ENCODE measurements at regions of chr3 and their contacts with region 1.

Region 1: GRCh38 chr3:184174646-184175492 is at the start of gene AP2M1:
- DNase-seq: peak; percentile 99
- ATAC-seq: peak; percentile 86
- H3K4me3 ChIP-seq: peak within 1 kb of the TSS; percentile 89
- H3K27ac ChIP-seq: peak within 1 kb of the TSS; percentile 62
- H3K4me1 ChIP-seq: peaks cover 54% of the 10 kb centered on the region
- H3K27me3 ChIP-seq: no peaks in the 10 kb centered on the region
- CTCF ChIP-seq: peak; percentile 19; the same call in 1 of the 2 replicates
- total RNA-seq, gene AP2M1: 522 and 538 TPM in 2 replicates

Region 2: GRCh38 chr3:183837390-183837789 is 337.5 kb before region 1 on chr3:
- CTCF ChIA-PET with region 1: no interaction called
- POLR2A ChIA-PET with region 1: no interaction called
- intact Hi-C with region 1: no loop called
- DNase-seq: no peak
- ATAC-seq: no peak
- H3K4me3 ChIP-seq: no peak overlapping the region
- H3K27ac ChIP-seq: no peak overlapping the region
- H3K4me1 ChIP-seq: no peaks in the 10 kb centered on the region
- H3K27me3 ChIP-seq: no peaks in the 10 kb centered on the region
- CTCF ChIP-seq: no peak

Region 3: DNA sequence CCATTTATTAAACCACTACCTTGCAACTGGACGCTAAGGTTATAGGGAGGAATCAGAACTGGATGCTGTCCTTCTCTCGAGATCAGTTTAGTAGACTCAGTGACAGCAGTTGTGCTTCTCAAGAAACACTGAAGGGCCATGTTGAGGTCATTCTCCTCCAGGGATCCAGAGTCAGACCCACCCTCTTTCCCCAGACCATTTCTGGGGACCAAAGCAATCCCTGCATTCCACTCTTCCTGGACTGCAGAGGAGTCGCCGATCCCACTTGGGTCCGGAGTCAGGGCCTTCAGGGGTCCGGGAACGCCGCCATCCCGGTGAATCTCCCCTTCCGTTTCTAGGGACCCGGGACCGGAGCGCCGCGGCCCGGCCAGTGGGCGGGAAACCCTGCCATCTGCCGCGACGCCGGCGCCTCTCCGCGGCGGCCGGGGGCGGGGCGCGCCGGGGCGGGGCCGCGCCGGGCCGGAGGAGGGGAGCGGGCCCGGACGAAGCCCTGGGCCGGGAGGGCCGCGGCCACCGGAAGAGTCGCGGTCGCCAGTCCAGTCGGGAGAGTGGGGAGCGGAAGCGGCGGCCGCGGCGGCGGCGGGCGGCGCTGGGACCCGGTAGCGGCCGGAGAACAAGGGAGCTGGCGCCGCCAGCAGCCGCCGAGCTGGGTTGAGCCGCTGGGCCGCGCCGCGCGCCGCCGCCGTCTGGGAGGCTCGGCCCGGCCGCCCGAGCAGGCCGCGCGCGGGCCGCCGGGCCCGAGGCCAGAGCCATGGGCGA is 19.8 kb before region 1 on chr3 and contains the start of gene DVL3:
- CTCF ChIA-PET with region 1: no interaction called
- POLR2A ChIA-PET with region 1: no interaction called
- intact Hi-C with region 1: loop called (anchors 2 kb)
- DNase-seq: peak; percentile 64
- ATAC-seq: peak; percentile 84
- H3K4me3 ChIP-seq: peak within 1 kb of the TSS; percentile 90
- H3K27ac ChIP-seq: peak within 1 kb of the TSS; percentile 28
- H3K4me1 ChIP-seq: peaks cover 13% of the 10 kb centered on the region
- H3K27me3 ChIP-seq: no peaks in the 10 kb centered on the region
- CTCF ChIP-seq: no peak
- total RNA-seq, gene DVL3: 50.6 and 56.1 TPM in 2 replicates

Region 4: GRCh38 chr3:184298759-184299496 is 124.1 kb after region 1 on chr3 and contains the start of gene PSMD2:
- CTCF ChIA-PET with region 1: no interaction called
- POLR2A ChIA-PET with region 1: no interaction called
- intact Hi-C with region 1: loop called (anchors 1 kb)
- DNase-seq: peak; percentile 97
- ATAC-seq: peak; percentile 89
- H3K4me3 ChIP-seq: peak within 1 kb of the TSS; percentile 100
- H3K27ac ChIP-seq: peak within 1 kb of the TSS; percentile 80
- H3K4me1 ChIP-seq: peaks cover 20% of the 10 kb centered on the region
- H3K27me3 ChIP-seq: no peaks in the 10 kb centered on the region
- CTCF ChIP-seq: no peak
- total RNA-seq, gene PSMD2: 1,057 and 1,393 TPM in 2 replicates